HepG2 (cell line): ENCODE measurements at regions of chr2 and their contacts with region 1.

Region 1: GRCh38 chr2:120552800-120553481 is 182.7 kb upstream of the GLI2 start:
- DNase-seq: peak; percentile 90
- ATAC-seq: peak; percentile 91
- H3K4me3 ChIP-seq: peak overlapping the region in 1 of 3 experiments; percentile 20; a peak in 3 of 6 replicates
- H3K27ac ChIP-seq: peak overlapping the region; percentile 44
- H3K4me1 ChIP-seq: peaks cover 92% of the 10 kb centered on the region
- H3K27me3 ChIP-seq: peaks cover 6 to 19% of the 10 kb centered on the region in 2 experiments; a peak in 4 of 5 replicates
- CTCF ChIP-seq: peak; percentile 99
- EP300 ChIP-seq: peak; percentile 20 to 36; a peak in 2 of 4 replicates
- POLR2A ChIP-seq: peak in 1 of 2 experiments; percentile 50; a peak in 1 of 4 replicates
- RAD21 ChIP-seq: peak; percentile 99

Region 2: DNA sequence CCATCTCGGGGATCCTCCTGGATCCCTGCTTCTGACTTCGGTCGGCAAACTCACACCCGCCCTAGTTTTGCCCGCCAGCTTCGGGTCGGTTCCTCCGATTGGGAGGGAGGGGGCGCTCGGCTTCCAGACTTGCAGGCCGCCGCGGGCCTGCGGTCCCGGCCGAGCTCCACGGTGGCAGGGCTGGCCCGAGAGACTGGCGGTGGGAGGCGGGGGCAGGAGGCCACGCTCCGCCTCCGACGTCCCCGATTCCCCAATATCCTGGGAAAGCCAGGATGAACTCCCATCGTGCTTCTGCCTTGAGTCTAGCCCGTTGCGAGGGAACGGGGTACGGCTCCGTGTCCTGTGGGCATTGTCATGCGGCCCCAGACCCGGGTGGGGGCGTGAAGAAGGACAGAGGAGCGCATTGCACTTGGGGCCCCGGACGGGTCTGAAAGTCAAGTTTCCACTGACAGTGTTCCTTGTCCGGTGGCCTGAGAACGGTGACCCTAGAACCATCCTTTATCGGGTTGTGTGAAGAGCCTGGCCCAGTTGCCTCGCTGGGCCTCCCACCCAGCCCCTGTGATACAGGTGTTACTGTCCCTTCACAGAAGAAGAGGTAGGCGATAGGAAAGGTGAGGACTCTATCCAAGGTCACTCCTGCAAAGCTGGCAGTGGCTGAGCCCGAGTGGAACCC is 209.4 kb before region 1 on chr2:
- CTCF ChIA-PET with region 1: interaction called, 17 read pairs
- POLR2A ChIA-PET with region 1: interaction called, 7 read pairs
- in situ Hi-C with region 1: loop called (anchors 5 kb)
- intact Hi-C with region 1: loop called (anchors 1 kb)
- DNase-seq: peak; percentile 68
- ATAC-seq: peak; percentile 89
- H3K4me3 ChIP-seq: peak overlapping the region in 1 of 3 experiments; percentile 36; a peak in 1 of 6 replicates
- H3K27ac ChIP-seq: no peak overlapping the region
- H3K4me1 ChIP-seq: peaks cover 34% of the 10 kb centered on the region
- H3K27me3 ChIP-seq: peaks cover 25 to 88% of the 10 kb centered on the region in 2 experiments; a peak in 4 of 5 replicates
- CTCF ChIP-seq: peak; percentile 97
- EP300 ChIP-seq: no peak
- POLR2A ChIP-seq: no peak
- RAD21 ChIP-seq: peak; percentile 100

Region 3: DNA sequence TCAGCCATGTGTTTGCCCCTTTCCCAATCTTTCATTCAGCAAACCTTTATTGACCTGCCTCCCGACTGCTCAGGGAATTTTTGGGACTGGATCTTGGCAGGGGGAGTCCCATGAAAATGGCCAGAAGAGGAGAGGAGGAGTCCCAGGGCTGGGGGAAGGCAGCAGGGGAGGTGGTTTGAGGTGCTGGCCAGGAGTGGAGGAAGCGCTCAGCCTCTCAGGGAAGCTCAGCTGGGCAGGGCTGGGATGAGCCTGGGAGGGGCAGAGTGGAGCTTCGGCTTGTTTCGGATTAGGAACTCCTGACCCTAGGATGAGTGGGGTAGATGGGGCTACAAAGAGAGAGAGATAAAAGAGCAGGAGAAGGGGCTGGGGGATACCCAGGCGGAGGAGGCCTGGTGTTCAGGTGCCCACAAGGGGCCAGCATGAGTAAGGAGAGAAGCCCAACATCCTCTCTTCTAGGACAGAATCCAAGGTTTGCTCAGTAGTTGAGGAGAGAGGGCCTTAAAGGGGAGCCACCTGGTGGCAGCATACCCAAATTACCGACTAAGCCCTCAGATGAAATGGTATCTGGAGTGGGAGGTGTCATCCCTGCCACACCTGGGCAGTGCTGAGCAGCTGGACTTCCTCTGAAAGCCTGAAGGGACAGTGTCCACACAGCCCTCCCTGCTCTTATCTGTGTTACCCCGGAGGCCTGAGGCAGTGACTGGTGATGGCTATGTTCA is 115.9 kb before region 1 on chr2:
- CTCF ChIA-PET with region 1: interaction called, 12 read pairs
- POLR2A ChIA-PET with region 1: interaction called, 3 read pairs
- in situ Hi-C with region 1: no loop called
- intact Hi-C with region 1: loop called (anchors 1 kb)
- DNase-seq: peak; percentile 80
- ATAC-seq: peak; percentile 80
- H3K4me3 ChIP-seq: no peak overlapping the region
- H3K27ac ChIP-seq: no peak overlapping the region
- H3K4me1 ChIP-seq: peaks cover 27% of the 10 kb centered on the region
- H3K27me3 ChIP-seq: peaks cover 23 to 80% of the 10 kb centered on the region in 2 experiments
- CTCF ChIP-seq: peak; percentile 82
- EP300 ChIP-seq: no peak
- POLR2A ChIP-seq: no peak
- RAD21 ChIP-seq: peak; percentile 95

Region 4: GRCh38 chr2:120520929-120521912 is 31.7 kb before region 1 on chr2:
- CTCF ChIA-PET with region 1: interaction called, 11 read pairs
- POLR2A ChIA-PET with region 1: interaction called, 3 read pairs
- in situ Hi-C with region 1: loop called (anchors 5 kb)
- intact Hi-C with region 1: loop called (anchors 2 kb)
- DNase-seq: peak; percentile 60
- ATAC-seq: peak; percentile 37
- H3K4me3 ChIP-seq: no peak overlapping the region
- H3K27ac ChIP-seq: no peak overlapping the region
- H3K4me1 ChIP-seq: peaks cover 72% of the 10 kb centered on the region
- H3K27me3 ChIP-seq: peaks cover 0 to 5% of the 10 kb centered on the region in 2 experiments; a peak in 1 of 5 replicates
- CTCF ChIP-seq: peak; percentile 77
- EP300 ChIP-seq: no peak
- POLR2A ChIP-seq: no peak
- RAD21 ChIP-seq: peak; percentile 80

Region 5: DNA sequence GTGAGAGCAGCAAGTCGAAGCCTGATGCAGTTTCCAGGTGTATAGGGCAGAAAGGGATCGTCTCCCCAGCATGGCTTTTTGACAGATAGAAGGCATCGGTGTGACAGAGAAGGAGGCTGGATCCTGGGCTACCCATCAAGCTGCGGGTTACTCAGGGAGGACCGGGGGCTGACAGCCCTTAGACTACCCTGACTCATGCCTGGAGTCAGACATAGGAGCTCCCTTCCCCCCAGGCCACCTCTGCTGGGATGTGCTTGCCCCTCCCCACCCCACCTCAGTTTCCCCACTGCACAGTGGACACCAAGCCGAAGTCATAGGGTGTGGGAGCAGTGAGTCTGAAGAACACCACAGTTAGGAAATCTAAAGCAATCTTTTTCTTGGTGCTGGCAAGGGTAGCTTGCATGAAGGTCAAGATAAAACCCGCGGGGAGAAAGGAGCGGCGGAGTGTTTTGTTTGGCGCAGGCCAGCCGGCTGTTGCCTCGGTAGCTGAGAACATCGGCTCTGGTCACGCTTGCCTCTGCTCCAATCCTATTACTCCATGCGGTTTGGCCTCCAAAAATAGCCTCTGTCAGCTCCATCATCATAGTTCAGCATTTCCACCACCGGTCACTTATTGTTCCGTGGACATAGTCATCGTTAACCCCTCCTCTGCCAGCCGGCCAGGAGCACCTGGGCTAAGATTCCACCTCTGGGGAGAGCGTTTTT is 13.5 kb after region 1 on chr2:
- CTCF ChIA-PET with region 1: no interaction called
- POLR2A ChIA-PET with region 1: interaction called, 4 read pairs
- in situ Hi-C with region 1: no loop called
- intact Hi-C with region 1: loop called (anchors 1 kb)
- DNase-seq: no peak
- ATAC-seq: no peak
- H3K4me3 ChIP-seq: no peak overlapping the region
- H3K27ac ChIP-seq: no peak overlapping the region
- H3K4me1 ChIP-seq: peaks cover 57% of the 10 kb centered on the region
- H3K27me3 ChIP-seq: peaks cover 38 to 88% of the 10 kb centered on the region in 2 experiments
- CTCF ChIP-seq: no peak
- EP300 ChIP-seq: no peak
- POLR2A ChIP-seq: no peak
- RAD21 ChIP-seq: no peak

Region 6: DNA sequence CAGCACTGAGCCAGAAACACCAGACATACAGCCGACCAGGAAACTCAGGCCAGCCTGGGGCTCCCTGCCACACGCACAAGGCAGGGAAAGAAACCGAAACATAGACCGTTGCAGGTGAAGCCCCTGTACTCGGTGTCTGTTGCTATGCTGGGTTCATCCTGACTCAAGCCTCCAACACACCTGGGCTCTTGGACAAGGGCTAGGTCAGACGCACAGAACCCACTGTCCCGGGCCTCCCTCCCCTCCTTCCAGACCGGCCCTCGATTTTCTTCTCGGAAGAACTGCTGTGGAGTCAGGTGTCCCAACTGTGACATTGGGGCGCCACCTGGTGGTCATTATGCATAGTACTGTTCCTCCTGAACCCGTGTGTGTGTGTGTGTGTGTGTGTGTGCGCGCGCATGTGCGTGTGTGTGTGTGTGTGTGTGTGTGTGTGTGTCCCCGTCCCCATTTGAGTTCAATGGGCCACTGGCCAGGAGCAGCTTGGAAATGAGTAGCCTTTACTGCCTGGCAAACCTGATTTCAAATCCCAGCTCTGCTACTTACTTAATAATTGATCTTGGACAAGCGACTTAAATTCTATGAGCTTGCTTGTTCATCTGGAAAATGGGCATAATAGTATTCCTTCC is 127.3 kb after region 1 on chr2:
- CTCF ChIA-PET with region 1: interaction called, 3 read pairs
- POLR2A ChIA-PET with region 1: no interaction called
- in situ Hi-C with region 1: loop called (anchors 10 kb)
- intact Hi-C with region 1: loop called (anchors 5 kb)
- DNase-seq: peak; percentile 82
- ATAC-seq: peak; percentile 85
- H3K4me3 ChIP-seq: no peak overlapping the region
- H3K27ac ChIP-seq: no peak overlapping the region
- H3K4me1 ChIP-seq: peaks cover 5% of the 10 kb centered on the region; the same call in 1 of the 2 replicates
- H3K27me3 ChIP-seq: peaks cover 2 to 63% of the 10 kb centered on the region in 2 experiments; a peak in 3 of 5 replicates
- CTCF ChIP-seq: peak; percentile 93
- EP300 ChIP-seq: no peak
- POLR2A ChIP-seq: no peak
- RAD21 ChIP-seq: peak; percentile 88

Region 7: GRCh38 chr2:120735746-120736170 is 182.8 kb after region 1 on chr2 and contains the start of gene GLI2:
- CTCF ChIA-PET with region 1: no interaction called
- POLR2A ChIA-PET with region 1: no interaction called
- in situ Hi-C with region 1: no loop called
- intact Hi-C with region 1: no loop called
- DNase-seq: peak; percentile 15
- ATAC-seq: peak; percentile 92
- H3K4me3 ChIP-seq: peak within 1 kb of the TSS in 2 of 3 experiments; percentile 13 to 57; a peak in 3 of 6 replicates
- H3K27ac ChIP-seq: no peak within 1 kb of the TSS
- H3K4me1 ChIP-seq: no peaks in the 10 kb centered on the region
- H3K27me3 ChIP-seq: peaks cover 15 to 95% of the 10 kb centered on the region in 2 experiments; a peak in 4 of 5 replicates
- CTCF ChIP-seq: peak; percentile 63; the same call in 1 of the 2 replicates
- EP300 ChIP-seq: no peak
- POLR2A ChIP-seq: no peak
- RAD21 ChIP-seq: peak; percentile 67
- total RNA-seq, gene GLI2: not detected in 2 replicates